ENCODE measurements at regions of chr7 and their contacts with region 1.

Region 1: GRCh38 chr7:17298207-17298839 is at the start of gene AHR:
- DNase-seq: peak; percentile 89
- H3K4me3 Mint-ChIP-seq: peak within 1 kb of the TSS; percentile 88
- H3K27ac Mint-ChIP-seq: peak within 1 kb of the TSS; percentile 97
- H3K4me1 Mint-ChIP-seq: peaks cover 18% of the 10 kb centered on the region
- H3K27me3 Mint-ChIP-seq: no peaks in the 10 kb centered on the region
- CTCF ChIP-seq: no peak
- total RNA-seq, gene AHR: 99.1 and 100 TPM in 2 replicates

Region 2: DNA sequence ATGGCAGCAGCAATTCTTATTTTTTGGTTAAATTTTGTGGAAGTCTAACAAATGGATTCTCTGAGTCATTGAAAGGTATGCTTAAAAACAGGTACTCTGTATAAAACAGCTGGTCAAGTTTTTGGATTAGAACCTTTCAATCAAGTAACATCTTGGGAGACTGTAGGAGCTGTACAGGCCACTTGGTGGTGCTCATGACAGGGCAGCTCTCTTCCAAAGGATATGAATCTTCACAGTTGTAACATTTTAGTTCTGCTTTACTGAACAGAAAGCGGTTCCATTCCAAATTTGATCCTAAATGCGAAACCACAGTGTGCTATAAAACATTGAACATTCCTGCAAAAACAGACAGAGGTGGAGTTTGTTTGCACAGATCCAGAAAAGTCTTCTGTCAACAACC is 372.0 kb before region 1 on chr7:
- CTCF ChIA-PET with region 1: interaction called, 6 read pairs
- POLR2A ChIA-PET with region 1: interaction called, 8 read pairs
- intact Hi-C with region 1: loop called (anchors 1 kb)
- DNase-seq: peak; percentile 63
- H3K4me3 Mint-ChIP-seq: no peak overlapping the region
- H3K27ac Mint-ChIP-seq: no peak overlapping the region
- H3K4me1 Mint-ChIP-seq: peaks cover 24% of the 10 kb centered on the region
- H3K27me3 Mint-ChIP-seq: no peaks in the 10 kb centered on the region
- CTCF ChIP-seq: peak; percentile 71

Region 3: GRCh38 chr7:17009007-17009719 is 289.2 kb before region 1 on chr7:
- CTCF ChIA-PET with region 1: interaction called, 3 read pairs
- POLR2A ChIA-PET with region 1: interaction called, 4 read pairs
- intact Hi-C with region 1: loop called (anchors 2 kb)
- DNase-seq: peak; percentile 53
- H3K4me3 Mint-ChIP-seq: no peak overlapping the region
- H3K27ac Mint-ChIP-seq: peak overlapping the region; percentile 69
- H3K4me1 Mint-ChIP-seq: peaks cover 29% of the 10 kb centered on the region
- H3K27me3 Mint-ChIP-seq: no peaks in the 10 kb centered on the region
- CTCF ChIP-seq: peak; percentile 26

Region 4: DNA sequence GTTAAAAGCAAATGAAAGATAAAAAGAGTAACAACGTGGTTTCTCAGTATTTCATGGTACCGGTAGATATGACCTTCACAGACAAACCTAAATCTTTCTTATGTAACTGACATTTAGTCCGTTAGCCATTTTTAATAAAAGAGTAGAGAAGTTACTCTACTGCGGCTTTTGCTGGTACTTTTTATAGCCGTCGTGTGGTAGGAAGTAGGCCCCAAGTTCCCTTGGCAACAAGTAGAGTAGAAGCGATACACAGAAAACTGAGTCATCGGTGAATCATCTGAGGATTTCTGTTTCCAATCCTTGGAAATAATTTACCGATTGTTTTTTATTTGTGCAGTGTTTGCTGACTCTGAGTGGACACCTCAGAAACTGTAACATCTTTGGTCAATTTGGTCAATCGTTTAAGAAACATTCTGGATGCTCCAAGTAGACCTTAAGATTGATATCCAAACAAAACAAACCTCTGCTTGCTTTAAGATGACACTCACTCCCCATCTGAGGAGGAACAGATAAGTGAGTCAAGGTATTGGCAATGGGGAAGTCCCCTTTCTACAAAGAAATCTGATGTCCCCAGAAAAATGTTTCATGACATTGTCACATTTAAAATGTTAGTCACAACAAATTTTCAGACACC is 63.8 kb before region 1 on chr7:
- CTCF ChIA-PET with region 1: no interaction called
- POLR2A ChIA-PET with region 1: interaction called, 7 read pairs
- intact Hi-C with region 1: loop called (anchors 1 kb)
- DNase-seq: peak; percentile 92
- H3K4me3 Mint-ChIP-seq: peak overlapping the region; percentile 31
- H3K27ac Mint-ChIP-seq: peak overlapping the region; percentile 96
- H3K4me1 Mint-ChIP-seq: peaks cover 35% of the 10 kb centered on the region
- H3K27me3 Mint-ChIP-seq: no peaks in the 10 kb centered on the region
- CTCF ChIP-seq: no peak

Region 5: GRCh38 chr7:17530741-17531417 is 232.6 kb after region 1 on chr7:
- CTCF ChIA-PET with region 1: interaction called, 21 read pairs
- POLR2A ChIA-PET with region 1: interaction called, 14 read pairs
- intact Hi-C with region 1: loop called (anchors 2 kb)
- DNase-seq: peak; percentile 44
- H3K4me3 Mint-ChIP-seq: no peak overlapping the region
- H3K27ac Mint-ChIP-seq: peak overlapping the region; percentile 52
- H3K4me1 Mint-ChIP-seq: peaks cover 45% of the 10 kb centered on the region
- H3K27me3 Mint-ChIP-seq: no peaks in the 10 kb centered on the region
- CTCF ChIP-seq: peak; percentile 17

Region 6: DNA sequence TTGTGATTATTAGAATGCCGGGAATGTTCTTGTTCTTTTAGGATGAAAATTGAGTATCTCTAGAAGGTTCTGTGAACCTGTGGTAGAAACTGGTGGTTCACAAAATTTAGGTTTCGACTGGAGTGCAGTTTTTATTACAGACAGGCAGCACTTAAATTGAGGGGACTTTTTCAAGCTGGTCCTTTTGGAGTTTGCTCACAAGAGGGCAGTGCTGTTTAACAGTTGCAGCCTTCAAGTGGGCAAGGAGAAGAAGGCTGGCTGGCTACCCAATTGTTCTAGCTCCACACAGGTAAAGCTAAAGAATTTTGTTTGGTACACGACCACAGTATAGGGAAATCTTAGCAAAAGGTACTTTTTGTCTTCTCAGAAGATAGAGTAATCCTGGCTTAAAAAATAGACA is 408.4 kb after region 1 on chr7:
- CTCF ChIA-PET with region 1: interaction called, 3 read pairs
- POLR2A ChIA-PET with region 1: no interaction called
- intact Hi-C with region 1: loop called (anchors 1 kb)
- DNase-seq: peak; percentile 83
- H3K4me3 Mint-ChIP-seq: no peak overlapping the region
- H3K27ac Mint-ChIP-seq: peak overlapping the region; percentile 55
- H3K4me1 Mint-ChIP-seq: peaks cover 7% of the 10 kb centered on the region
- H3K27me3 Mint-ChIP-seq: no peaks in the 10 kb centered on the region
- CTCF ChIP-seq: peak; percentile 67

Region 7: DNA sequence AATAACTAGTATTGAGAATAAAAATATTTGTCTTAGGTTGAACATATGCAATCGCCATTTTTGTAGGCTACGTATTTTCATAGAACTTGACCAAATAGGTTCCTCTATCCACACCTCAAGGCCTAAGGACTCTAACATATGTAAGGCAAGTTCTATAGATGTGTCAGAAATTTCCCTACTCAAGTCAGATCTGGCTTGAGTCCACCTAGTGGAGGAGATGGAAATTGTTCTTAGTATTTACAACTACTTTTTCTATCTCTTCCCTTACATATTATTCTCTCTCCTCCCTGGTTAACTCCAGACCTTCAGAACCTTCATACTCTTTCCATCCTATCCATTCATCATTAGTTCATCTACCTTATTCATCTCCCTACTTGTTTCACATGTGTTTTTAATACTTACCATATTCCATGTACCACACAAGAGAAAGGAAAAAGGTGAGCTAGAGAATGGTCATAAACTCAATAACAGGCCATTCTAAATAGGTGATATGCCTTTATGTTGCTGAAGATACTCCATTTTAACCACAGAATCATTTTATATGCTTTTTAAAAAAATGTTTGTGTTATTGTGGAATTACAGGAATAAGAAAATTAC is 1022.7 kb after region 1 on chr7:
- CTCF ChIA-PET with region 1: no interaction called
- POLR2A ChIA-PET with region 1: no interaction called
- intact Hi-C with region 1: loop called (anchors 5 kb)
- DNase-seq: peak; percentile 58
- H3K4me3 Mint-ChIP-seq: no peak overlapping the region
- H3K27ac Mint-ChIP-seq: no peak overlapping the region
- H3K4me1 Mint-ChIP-seq: peaks cover 9% of the 10 kb centered on the region
- H3K27me3 Mint-ChIP-seq: no peaks in the 10 kb centered on the region
- CTCF ChIP-seq: peak; percentile 47